ENCODE measurements at regions of chrX and their contacts with region 1.

Region 1: GRCh38 chrX:23667239-23668177 is at the start of gene PRDX4:
- DNase-seq: peak; percentile 60
- H3K4me3 Mint-ChIP-seq: peak within 1 kb of the TSS; percentile 86
- H3K27ac Mint-ChIP-seq: peak within 1 kb of the TSS; percentile 83
- H3K4me1 Mint-ChIP-seq: peaks cover 20% of the 10 kb centered on the region
- H3K27me3 Mint-ChIP-seq: no peaks in the 10 kb centered on the region
- total RNA-seq, gene PRDX4: 59.0 and 68.0 TPM in 2 replicates

Region 2: DNA sequence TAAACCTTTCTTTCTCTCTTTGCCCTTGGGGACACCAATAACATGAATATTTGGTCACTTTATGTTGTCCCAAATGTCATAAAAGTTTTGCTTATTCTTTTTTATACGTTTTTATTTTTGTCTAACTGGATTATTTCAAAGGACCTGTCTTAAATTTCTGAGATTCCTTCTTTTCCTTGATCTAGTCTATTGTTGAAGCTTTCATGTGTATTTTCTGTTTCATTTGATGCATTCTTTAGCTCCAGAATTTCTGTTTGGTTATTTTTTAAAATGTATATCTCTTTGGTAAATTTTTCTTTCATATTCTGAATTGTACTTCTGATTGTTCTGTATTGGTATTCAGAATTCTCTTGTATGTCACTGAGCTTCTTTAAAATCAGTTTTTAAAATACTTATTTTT is 244.6 kb before region 1 on chrX:
- intact Hi-C with region 1: no loop called
- DNase-seq: no peak
- H3K4me3 Mint-ChIP-seq: no peak overlapping the region
- H3K27ac Mint-ChIP-seq: no peak overlapping the region
- H3K4me1 Mint-ChIP-seq: no peaks in the 10 kb centered on the region
- H3K27me3 Mint-ChIP-seq: no peaks in the 10 kb centered on the region

Region 3: DNA sequence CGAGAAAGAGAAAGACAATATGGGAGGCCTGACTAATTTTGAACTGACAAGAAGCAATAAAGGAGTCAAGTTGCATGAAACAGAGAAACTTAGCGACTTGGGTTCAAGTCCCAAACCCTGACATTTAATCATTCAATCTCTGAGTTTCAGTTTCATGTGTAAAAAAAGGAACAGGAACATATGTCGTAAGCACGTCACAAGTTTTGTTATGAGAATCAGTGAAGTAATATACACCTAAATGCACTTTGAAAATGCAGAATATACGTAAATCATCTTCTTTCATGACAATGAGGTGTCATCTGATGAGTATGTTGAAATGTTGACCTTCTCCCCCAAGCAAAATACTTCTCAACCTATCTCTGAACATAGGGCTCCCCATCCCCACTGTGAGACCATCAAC is 65.2 kb after region 1 on chrX:
- intact Hi-C with region 1: loop called (anchors 2 kb)
- DNase-seq: no peak
- H3K4me3 Mint-ChIP-seq: peak overlapping the region; percentile 57
- H3K27ac Mint-ChIP-seq: peak overlapping the region; percentile 79
- H3K4me1 Mint-ChIP-seq: peaks cover 27% of the 10 kb centered on the region
- H3K27me3 Mint-ChIP-seq: no peaks in the 10 kb centered on the region

Region 4: GRCh38 chrX:23773601-23774175 is 106.2 kb after region 1 on chrX:
- intact Hi-C with region 1: loop called (anchors 2 kb)
- DNase-seq: peak; percentile 35
- H3K4me3 Mint-ChIP-seq: peak overlapping the region; percentile 26
- H3K27ac Mint-ChIP-seq: peak overlapping the region; percentile 87
- H3K4me1 Mint-ChIP-seq: peaks cover 10% of the 10 kb centered on the region
- H3K27me3 Mint-ChIP-seq: no peaks in the 10 kb centered on the region

Region 5: GRCh38 chrX:23907498-23908218 is 240.2 kb after region 1 on chrX and contains the starts of genes APOO and CXorf58:
- intact Hi-C with region 1: loop called (anchors 10 kb)
- DNase-seq: peak; percentile 90
- H3K4me3 Mint-ChIP-seq: peak within 1 kb of the TSS; percentile 77
- H3K27ac Mint-ChIP-seq: peak within 1 kb of the TSS; percentile 85
- H3K4me1 Mint-ChIP-seq: peaks cover 22% of the 10 kb centered on the region
- H3K27me3 Mint-ChIP-seq: no peaks in the 10 kb centered on the region
- total RNA-seq, gene APOO: 21.9 and 22.4 TPM in 2 replicates
- total RNA-seq, gene CXorf58: 0.21 TPM in 1 of 2 replicates, not detected in the other

Region 6: GRCh38 chrX:24150051-24150790 is 482.7 kb after region 1 on chrX:
- intact Hi-C with region 1: loop called (anchors 10 kb)
- DNase-seq: peak; percentile 76
- H3K4me3 Mint-ChIP-seq: peak overlapping the region; percentile 93
- H3K27ac Mint-ChIP-seq: peak overlapping the region; percentile 87
- H3K4me1 Mint-ChIP-seq: peaks cover 45% of the 10 kb centered on the region
- H3K27me3 Mint-ChIP-seq: no peaks in the 10 kb centered on the region

Measured in activated T-helper 2 cell treated with anti-CD3 and anti-CD28 coated beads, Interferon-gamma antibody, Interleukin-2, Interleukin-4, amounts not matched to agents 10 μg/mL and 5 μg/mL and 100 μg/mL, durations not matched to agents 14 hours and 24 hours and 36 hours (primary cell).